Caco-2 (cell line): ENCODE measurements at regions of chr5 and their contacts with region 1.

Region 1: DNA sequence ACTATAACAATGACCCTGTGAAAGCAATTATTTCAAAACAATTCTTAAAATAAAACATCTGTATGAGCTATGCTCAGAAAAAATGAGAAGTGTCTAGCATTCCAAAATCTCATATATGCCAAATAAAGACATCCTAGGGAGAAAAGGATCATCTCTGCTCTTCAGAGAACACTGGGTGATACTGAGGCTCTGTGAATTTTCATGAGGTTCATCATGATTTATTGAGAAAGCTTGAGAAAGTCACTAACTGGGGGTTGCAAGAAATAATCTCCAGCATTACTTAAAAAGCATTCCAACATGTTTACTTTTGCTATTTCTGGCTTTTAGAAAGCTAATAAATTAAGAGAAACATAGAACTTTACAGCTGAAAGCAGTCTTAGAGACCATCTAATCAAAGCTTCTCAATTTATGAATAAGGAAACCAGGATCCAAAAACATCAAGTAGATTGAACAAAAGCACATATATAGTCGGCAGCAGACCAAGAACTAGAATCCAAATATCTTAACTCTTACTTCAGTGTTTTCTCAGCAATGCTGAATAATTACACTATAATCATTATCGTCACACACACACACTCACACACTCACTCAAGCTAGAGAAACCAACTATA is 372.8 kb downstream of the NR2F1-AS1 start:
- DNase-seq: no peak
- H3K4me3 ChIP-seq: no peak overlapping the region
- H3K4me3 Mint-ChIP-seq: no peak overlapping the region
- H3K27ac Mint-ChIP-seq: no peak overlapping the region
- H3K4me1 ChIP-seq: no peaks in the 10 kb centered on the region
- H3K4me1 Mint-ChIP-seq: no peaks in the 10 kb centered on the region
- H3K27me3 ChIP-seq: no peaks in the 10 kb centered on the region
- H3K27me3 Mint-ChIP-seq: no peaks in the 10 kb centered on the region
- CTCF ChIP-seq: no peak

Region 2: GRCh38 chr5:93092349-93093105 is 115.7 kb before region 1 on chr5:
- CTCF ChIA-PET with region 1: no interaction called
- POLR2A ChIA-PET with region 1: no interaction called
- intact Hi-C with region 1: no loop called
- DNase-seq: no peak
- H3K4me3 ChIP-seq: no peak overlapping the region
- H3K4me3 Mint-ChIP-seq: no peak overlapping the region
- H3K27ac Mint-ChIP-seq: no peak overlapping the region
- H3K4me1 ChIP-seq: peaks cover 4% of the 10 kb centered on the region; the same call in 1 of the 2 replicates
- H3K4me1 Mint-ChIP-seq: no peaks in the 10 kb centered on the region
- H3K27me3 ChIP-seq: no peaks in the 10 kb centered on the region
- H3K27me3 Mint-ChIP-seq: no peaks in the 10 kb centered on the region
- CTCF ChIP-seq: no peak

Region 3: DNA sequence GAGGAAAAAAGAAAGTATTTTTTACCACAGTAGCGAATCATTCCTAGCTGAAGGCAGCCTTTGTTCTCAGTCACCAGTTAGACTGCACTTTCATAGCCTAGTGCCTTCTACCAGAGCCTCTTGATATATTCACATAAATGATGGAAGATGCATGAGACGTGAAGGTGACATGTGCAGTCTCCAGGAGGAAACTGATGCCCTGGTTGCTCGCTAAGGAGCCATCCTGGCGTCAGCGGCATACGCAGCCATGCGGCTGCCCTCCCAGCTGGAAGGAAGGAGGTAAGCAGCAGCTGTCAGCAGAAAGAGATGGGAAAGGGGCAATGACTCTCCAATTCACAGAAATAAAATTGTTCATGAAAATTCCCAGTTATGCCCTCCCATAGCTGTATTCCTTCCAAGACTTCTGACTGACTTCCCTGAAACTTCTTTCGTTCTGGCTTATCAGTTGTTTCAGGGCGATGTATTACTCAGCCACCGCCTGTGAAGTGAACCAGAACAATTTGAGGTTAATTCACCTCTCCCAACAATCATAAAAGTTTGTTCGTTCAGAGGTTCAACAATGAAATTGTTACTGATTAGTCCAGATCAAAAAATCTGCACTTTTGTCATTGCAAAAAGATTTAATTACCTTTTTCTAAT is 41.5 kb after region 1 on chr5:
- CTCF ChIA-PET with region 1: no interaction called
- POLR2A ChIA-PET with region 1: no interaction called
- intact Hi-C with region 1: loop called (anchors 1 kb)
- DNase-seq: no peak
- H3K4me3 ChIP-seq: no peak overlapping the region
- H3K4me3 Mint-ChIP-seq: no peak overlapping the region
- H3K27ac Mint-ChIP-seq: no peak overlapping the region
- H3K4me1 ChIP-seq: no peaks in the 10 kb centered on the region
- H3K4me1 Mint-ChIP-seq: no peaks in the 10 kb centered on the region
- H3K27me3 ChIP-seq: no peaks in the 10 kb centered on the region
- H3K27me3 Mint-ChIP-seq: no peaks in the 10 kb centered on the region
- CTCF ChIP-seq: no peak